BJ (cell line): ENCODE measurements at regions of chr15 and their contacts with region 1.

Region 1: DNA sequence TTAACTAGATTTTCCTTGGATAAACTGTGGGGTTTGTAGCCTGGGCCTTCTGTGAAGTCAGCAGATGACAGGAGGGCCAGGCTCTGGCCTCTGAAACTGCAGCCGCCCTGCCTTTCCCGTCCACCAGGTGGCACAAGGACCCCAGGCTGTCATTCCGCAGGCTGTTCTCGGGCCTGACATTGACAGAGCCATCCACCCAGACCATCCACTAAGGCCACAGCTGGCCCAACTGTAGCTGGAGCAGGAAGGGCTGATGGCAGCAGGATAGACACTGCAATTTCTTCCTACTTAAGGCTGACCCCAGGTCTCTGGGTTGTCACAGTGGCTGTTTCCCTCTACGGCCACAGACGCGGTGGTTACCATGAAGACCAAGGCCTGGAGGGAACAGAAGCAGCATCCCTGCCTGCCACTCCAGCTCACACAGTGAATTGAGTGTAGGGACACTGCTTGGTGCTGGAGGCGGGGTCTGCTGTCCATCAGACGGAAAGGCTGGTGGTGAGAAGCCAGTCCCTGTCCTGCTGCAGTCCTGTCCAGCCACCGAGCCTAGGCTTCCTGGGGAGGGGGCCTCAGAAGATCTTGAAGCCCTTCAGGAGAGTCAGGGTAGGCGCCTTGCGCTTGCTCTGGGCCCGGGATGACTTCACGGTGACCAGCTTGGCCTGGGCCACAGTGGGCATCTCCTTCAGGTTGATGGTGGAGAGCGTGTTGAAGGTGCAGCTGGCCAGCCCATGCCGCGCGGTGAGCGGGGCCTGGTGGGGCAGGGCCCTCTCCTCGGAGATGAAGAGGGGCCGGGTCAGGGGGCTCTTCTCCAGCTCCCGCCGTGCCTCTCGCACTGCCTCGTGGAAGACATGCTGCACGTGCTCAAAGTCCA is 9.4 kb downstream of the SLC51B start:
- DNase-seq: no peak
- H3K4me3 ChIP-seq: no peak overlapping the region
- H3K27me3 ChIP-seq: peaks cover 5% of the 10 kb centered on the region; the same call in 1 of the 2 replicates
- CTCF ChIP-seq: peak; percentile 99

Region 2: GRCh38 chr15:64961013-64961412 is 93.6 kb before region 1 on chr15:
- CTCF ChIA-PET with region 1: no interaction called
- POLR2A ChIA-PET with region 1: no interaction called
- DNase-seq: no peak
- H3K4me3 ChIP-seq: no peak overlapping the region
- H3K27me3 ChIP-seq: no peaks in the 10 kb centered on the region
- CTCF ChIP-seq: no peak

Region 3: DNA sequence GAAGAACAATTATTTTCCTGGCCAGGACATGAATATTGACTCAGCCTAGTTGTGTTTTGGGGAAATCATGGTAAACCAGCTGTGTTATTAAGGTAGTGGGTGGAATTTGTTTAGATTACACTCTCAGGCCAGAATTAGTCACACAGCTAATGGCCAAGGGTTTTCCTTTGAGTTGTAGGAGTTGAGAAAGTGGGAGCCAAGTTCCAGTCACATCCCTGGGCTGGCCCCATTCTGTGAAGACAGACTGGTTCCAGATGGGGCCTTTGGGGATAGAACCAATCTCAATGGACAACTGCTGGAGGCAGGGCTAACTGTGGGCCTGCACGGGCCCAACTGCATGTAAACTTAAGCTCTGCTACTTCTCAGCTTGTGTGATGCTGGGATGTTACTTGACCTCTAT is 14.6 kb after region 1 on chr15:
- CTCF ChIA-PET with region 1: interaction called, 57 read pairs
- POLR2A ChIA-PET with region 1: interaction called, 6 read pairs
- DNase-seq: peak; percentile 91
- H3K4me3 ChIP-seq: no peak overlapping the region
- H3K27me3 ChIP-seq: peaks cover 20% of the 10 kb centered on the region
- CTCF ChIP-seq: no peak